B cell (primary cell): ENCODE measurements at regions of chr1 and their contacts with region 1.

Region 1: DNA sequence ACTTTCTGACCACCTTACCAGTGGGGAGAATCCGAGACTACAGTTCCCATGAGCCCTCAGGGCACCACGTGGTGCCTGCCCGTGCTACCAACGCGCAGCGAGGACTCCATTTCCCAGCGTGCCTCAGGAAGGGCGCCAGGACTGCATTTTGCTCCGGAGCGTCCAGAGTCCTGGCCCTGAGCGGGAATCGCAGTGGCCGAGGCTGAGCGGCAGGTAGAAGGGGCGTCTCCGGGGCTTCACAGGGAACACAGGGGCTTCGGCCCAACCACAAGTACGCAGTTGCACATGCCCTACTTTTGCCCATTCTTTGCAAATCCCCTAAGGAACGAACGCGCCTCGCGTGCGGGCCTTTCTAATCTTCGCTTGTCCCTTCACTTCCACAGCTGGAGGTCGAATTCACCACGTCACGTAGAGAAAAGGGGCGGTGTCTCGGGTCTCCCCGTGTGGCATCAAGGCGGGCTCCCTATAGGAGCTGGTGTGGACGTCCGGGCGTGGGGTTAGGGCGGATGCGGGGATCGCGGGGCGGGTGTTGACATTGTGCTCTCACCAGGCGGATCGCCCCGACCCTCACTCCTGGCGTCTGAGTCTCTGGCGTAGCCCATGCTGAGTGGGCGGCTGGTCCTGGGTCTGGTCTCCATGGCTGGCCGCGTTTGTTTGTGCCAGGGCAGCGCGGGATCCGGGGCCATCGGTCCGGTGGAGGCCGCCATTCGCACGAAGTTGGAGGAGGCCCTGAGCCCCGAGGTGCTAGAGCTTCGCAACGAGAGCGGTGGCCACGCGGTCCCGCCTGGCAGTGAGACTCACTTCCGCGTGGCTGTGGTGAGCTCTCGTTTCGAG is at the start of gene BOLA1:
- DNase-seq: peak; percentile 87
- ATAC-seq: peak; percentile 99
- H3K4me3 ChIP-seq: peak within 1 kb of the TSS; percentile 46 to 97 (median 80)
- H3K4me3 Mint-ChIP-seq: peak within 1 kb of the TSS; percentile 92
- H3K27ac ChIP-seq: peak within 1 kb of the TSS; percentile 49 to 67
- H3K27ac Mint-ChIP-seq: peak within 1 kb of the TSS; percentile 95
- H3K4me1 ChIP-seq: peaks cover 9 to 12% of the 10 kb centered on the region in 2 donors
- H3K4me1 Mint-ChIP-seq: peaks cover 15% of the 10 kb centered on the region
- H3K27me3 ChIP-seq: no peaks in the 10 kb centered on the region
- H3K27me3 Mint-ChIP-seq: no peaks in the 10 kb centered on the region
- CTCF ChIP-seq: no peak
- total RNA-seq, gene BOLA1: 15.9 and 16.7 TPM in 2 replicates

Region 2: DNA sequence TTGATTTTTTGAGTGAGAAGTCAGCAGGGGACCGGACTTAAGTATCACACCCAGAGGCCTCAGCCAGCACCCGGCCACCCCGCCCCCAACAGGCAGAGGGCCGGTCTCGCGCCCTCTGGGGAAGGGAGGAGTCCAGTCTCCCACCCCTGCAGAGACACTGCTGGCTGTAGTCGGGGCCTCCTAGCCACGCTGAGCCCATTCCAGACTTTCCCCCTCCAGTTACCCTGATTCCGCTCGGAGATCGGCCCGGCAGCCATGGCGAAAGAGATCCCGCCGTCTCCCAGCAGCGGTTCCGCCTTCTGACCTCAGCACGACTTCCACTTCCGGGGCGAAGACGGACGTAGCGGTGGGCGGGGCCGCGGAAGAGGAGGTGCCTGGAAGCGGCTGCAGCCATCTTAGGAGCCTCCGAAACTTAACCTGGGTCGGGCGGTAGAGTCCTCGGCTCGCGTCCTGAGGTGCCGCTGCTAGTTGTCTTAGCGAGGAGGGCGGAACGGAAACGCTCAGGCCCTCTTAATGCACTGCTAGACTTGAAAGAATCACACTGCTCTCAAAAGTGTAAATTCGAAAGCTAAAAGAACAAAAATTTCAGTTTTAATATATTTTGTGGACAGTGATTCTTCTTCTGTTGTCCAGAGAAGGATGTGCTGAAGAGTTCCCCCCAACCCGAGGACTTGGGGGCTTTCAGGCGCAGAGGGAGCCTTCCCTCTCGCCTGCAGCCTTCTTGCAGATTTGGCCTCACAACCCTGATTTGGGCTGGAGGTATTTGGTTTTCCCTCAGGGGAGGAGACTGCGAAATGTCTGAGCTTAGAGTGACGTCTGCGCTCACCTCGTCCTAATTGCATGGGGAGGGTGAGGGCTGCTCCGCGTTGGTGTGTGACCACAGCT is 28.1 kb after region 1 on chr1 and contains the start of gene SF3B4:
- CTCF ChIA-PET with region 1: no interaction called
- POLR2A ChIA-PET with region 1: no interaction called
- intact Hi-C with region 1: loop called (anchors 1 kb)
- DNase-seq: peak; percentile 96
- ATAC-seq: peak; percentile 95
- H3K4me3 ChIP-seq: peak within 1 kb of the TSS; percentile 76 to 98 (median 89)
- H3K4me3 Mint-ChIP-seq: peak within 1 kb of the TSS; percentile 98
- H3K27ac ChIP-seq: peak within 1 kb of the TSS; percentile 74 to 90
- H3K27ac Mint-ChIP-seq: peak within 1 kb of the TSS; percentile 97
- H3K4me1 ChIP-seq: peaks cover 17 to 24% of the 10 kb centered on the region in 2 donors
- H3K4me1 Mint-ChIP-seq: peaks cover 38% of the 10 kb centered on the region
- H3K27me3 ChIP-seq: peaks cover 0 to 2% (median 0%) of the 10 kb centered on the region in 4 experiments
- H3K27me3 Mint-ChIP-seq: peaks cover 20% of the 10 kb centered on the region
- CTCF ChIP-seq: no peak
- total RNA-seq, gene SF3B4: 59.7 and 60.1 TPM in 2 replicates

Region 3: DNA sequence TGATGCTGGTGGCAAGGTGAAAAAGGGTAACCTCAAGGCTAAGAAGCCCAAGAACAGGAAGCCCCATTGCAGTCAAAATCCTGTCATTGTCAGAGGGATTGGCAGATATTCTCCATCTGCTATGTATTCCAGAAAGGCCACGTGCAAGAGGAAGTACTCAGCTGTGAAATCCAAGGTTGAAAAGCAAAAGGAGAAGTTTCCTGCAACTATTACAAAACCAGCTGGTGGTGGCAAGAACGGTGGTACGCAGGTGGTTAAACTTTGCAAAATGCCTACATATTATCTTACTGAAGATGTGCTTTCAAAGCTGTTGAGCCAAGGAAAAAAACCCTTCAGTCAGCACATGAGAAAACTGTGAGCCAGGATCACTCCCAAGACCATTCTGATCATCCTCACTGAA is 154.2 kb after region 1 on chr1:
- CTCF ChIA-PET with region 1: interaction called, 3 read pairs
- POLR2A ChIA-PET with region 1: interaction called, 5 read pairs
- intact Hi-C with region 1: loop called (anchors 5 kb)
- DNase-seq: no peak
- ATAC-seq: no peak
- H3K4me3 ChIP-seq: no peak overlapping the region
- H3K4me3 Mint-ChIP-seq: peak overlapping the region; percentile 10
- H3K27ac ChIP-seq: no peak overlapping the region
- H3K27ac Mint-ChIP-seq: no peak overlapping the region
- H3K4me1 ChIP-seq: peaks cover 8% of the 10 kb centered on the region in 2 donors
- H3K4me1 Mint-ChIP-seq: peaks cover 20% of the 10 kb centered on the region
- H3K27me3 ChIP-seq: no peaks in the 10 kb centered on the region
- H3K27me3 Mint-ChIP-seq: no peaks in the 10 kb centered on the region
- CTCF ChIP-seq: no peak